Naive thymus-derived CD4-positive, alpha-beta T cell (primary cell): ENCODE measurements at regions of chr2 and their contacts with region 1.

Region 1: GRCh38 chr2:55175254-55176025 is 56.7 kb downstream of the CLHC1 start:
- DNase-seq: peak in 7 of 9 donors; percentile 40 to 69 (median 63)
- ATAC-seq: peak; percentile 96
- H3K4me3 ChIP-seq: no peak overlapping the region
- H3K4me3 Mint-ChIP-seq: peak overlapping the region in 7 of 10 donors; percentile 0 to 49 (median 24)
- H3K27ac ChIP-seq: no peak overlapping the region
- H3K27ac Mint-ChIP-seq: peak overlapping the region in 5 of 9 donors; percentile 2 to 69 (median 46)
- H3K4me1 ChIP-seq: no peaks in the 10 kb centered on the region
- H3K4me1 Mint-ChIP-seq: peaks cover 0 to 10% (median 8%) of the 10 kb centered on the region in 7 donors
- H3K27me3 ChIP-seq: no peaks in the 10 kb centered on the region
- H3K27me3 Mint-ChIP-seq: no peaks in the 10 kb centered on the region

Region 2: DNA sequence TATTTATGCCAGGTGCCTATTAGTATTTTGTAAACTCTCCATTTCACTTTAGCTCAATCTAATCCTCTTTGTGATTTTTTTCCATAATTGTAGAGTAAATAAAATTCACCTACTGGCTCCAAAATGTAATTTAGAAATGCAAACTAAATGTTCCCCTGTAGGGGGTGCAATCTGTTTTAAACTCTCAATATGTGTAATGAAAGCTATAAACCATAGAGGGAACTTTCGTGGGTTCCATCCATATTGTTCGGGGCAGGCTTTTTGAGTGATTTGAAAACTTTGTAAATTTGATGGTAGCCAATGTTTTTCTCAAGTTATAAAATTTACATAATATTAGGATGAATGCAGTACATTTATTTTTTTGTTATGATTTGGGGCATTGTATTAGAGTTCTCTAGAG is 968.8 kb before region 1 on chr2:
- CTCF ChIA-PET with region 1: no interaction called
- POLR2A ChIA-PET with region 1: no interaction called
- intact Hi-C with region 1: loop called in 1 of 2 experiments (anchors 10 kb)
- DNase-seq: peak in 2 of 9 donors; percentile 5 to 11
- ATAC-seq: no peak
- H3K4me3 ChIP-seq: no peak overlapping the region
- H3K4me3 Mint-ChIP-seq: no peak overlapping the region
- H3K27ac ChIP-seq: no peak overlapping the region
- H3K27ac Mint-ChIP-seq: no peak overlapping the region
- H3K4me1 ChIP-seq: no peaks in the 10 kb centered on the region
- H3K4me1 Mint-ChIP-seq: peaks cover 3 to 25% (median 13%) of the 10 kb centered on the region in 7 donors
- H3K27me3 ChIP-seq: no peaks in the 10 kb centered on the region
- H3K27me3 Mint-ChIP-seq: no peaks in the 10 kb centered on the region

Region 3: DNA sequence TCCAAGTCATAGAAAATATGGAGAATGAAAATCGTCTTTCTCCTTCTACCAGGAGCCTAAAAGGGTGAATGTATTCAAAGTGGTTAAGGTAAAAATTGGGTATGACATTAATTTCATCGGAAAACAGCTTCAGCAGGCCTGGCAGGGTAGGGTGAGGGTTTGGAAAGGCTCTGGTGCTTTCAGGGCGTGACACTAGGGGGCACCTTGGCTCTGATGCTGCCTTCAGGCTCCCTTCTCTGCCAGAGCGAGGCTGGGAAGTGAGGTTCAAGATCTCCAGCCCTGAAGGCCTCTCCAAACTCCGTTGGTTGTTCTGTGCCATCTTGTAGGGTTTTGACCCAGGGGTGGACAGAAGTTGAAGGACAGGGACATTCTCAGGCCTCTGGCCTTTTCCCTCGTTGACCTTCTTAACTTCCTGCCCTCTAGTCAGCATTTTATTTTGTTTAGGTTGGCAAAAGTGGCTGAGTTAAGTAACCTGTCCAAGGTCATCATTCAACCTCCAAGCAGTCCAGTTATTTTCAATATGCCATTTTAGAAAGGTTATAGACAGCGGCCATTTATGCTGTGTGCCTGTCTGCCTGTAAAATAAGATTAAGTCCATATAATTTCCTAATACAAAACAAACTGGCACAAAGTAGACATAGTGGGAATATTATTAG is 411.7 kb before region 1 on chr2:
- CTCF ChIA-PET with region 1: no interaction called
- POLR2A ChIA-PET with region 1: no interaction called
- intact Hi-C with region 1: loop called in 1 of 2 experiments (anchors 5 kb)
- DNase-seq: no peak
- ATAC-seq: no peak
- H3K4me3 ChIP-seq: no peak overlapping the region
- H3K4me3 Mint-ChIP-seq: no peak overlapping the region
- H3K27ac ChIP-seq: no peak overlapping the region
- H3K27ac Mint-ChIP-seq: no peak overlapping the region
- H3K4me1 ChIP-seq: no peaks in the 10 kb centered on the region
- H3K4me1 Mint-ChIP-seq: peaks cover 0 to 7% (median 0%) of the 10 kb centered on the region in 7 donors
- H3K27me3 ChIP-seq: no peaks in the 10 kb centered on the region
- H3K27me3 Mint-ChIP-seq: peaks cover 0 to 6% (median 3%) of the 10 kb centered on the region in 5 donors

Region 4: GRCh38 chr2:54899576-54900200 is 275.8 kb before region 1 on chr2:
- CTCF ChIA-PET with region 1: interaction called, 38 read pairs
- POLR2A ChIA-PET with region 1: no interaction called
- intact Hi-C with region 1: loop called in 1 of 2 experiments (anchors 1 kb)
- DNase-seq: peak in 5 of 9 donors; percentile 6 to 40 (median 16)
- ATAC-seq: peak; percentile 31
- H3K4me3 ChIP-seq: no peak overlapping the region
- H3K4me3 Mint-ChIP-seq: no peak overlapping the region
- H3K27ac ChIP-seq: no peak overlapping the region
- H3K27ac Mint-ChIP-seq: peak overlapping the region in 4 of 9 donors; percentile 9 to 89 (median 72)
- H3K4me1 ChIP-seq: peaks cover 10 to 19% of the 10 kb centered on the region in 2 donors
- H3K4me1 Mint-ChIP-seq: peaks cover 13 to 32% (median 29%) of the 10 kb centered on the region in 7 donors
- H3K27me3 ChIP-seq: no peaks in the 10 kb centered on the region
- H3K27me3 Mint-ChIP-seq: no peaks in the 10 kb centered on the region

Region 5: DNA sequence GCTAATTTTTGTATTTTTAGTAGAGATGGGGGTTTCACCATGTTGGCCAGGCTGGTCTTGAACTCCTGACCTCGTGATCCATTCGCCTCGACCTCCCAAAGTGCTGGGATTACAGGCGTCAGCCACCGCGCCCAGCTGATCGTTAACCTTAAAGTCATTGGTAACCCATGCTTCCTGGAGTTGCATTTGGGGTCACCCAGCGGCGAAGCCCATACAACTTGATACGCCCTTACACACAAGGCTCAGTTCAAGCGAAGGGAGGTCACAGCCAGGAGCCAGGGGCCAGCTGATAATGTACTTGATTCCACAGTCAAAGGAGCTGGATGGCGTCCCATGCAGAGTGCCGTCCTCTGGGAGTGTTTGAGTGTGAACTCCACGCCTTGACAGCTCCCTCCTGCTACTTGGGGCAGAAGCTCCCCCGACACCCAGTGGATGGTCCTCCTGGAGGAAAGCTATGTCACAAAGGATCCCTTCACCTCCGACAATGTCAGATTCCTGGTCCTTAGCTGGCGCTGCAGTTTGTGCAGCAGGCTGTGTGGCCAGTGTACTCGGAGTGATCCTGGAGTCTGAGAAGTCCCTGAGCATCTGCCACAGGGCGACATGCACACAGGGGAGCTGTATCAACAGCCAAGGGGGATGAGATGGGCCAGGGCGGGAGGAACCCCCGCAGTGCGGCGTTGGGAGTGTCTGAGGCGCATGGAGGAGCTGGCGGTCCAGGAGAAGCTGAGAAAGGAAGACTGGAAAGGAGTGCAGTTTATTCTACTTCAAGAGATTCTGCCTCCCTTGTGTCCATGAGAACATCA is 48.7 kb after region 1 on chr2:
- CTCF ChIA-PET with region 1: interaction called, 6 read pairs
- POLR2A ChIA-PET with region 1: no interaction called
- intact Hi-C with region 1: loop called in 1 of 2 experiments (anchors 5 kb)
- DNase-seq: peak in 1 of 9 donors; percentile 13
- ATAC-seq: no peak
- H3K4me3 ChIP-seq: no peak overlapping the region
- H3K4me3 Mint-ChIP-seq: peak overlapping the region; percentile 71 to 89 (median 82)
- H3K27ac ChIP-seq: peak overlapping the region; percentile 92
- H3K27ac Mint-ChIP-seq: peak overlapping the region; percentile 72 to 94 (median 89)
- H3K4me1 ChIP-seq: peaks cover 14 to 18% of the 10 kb centered on the region in 2 donors
- H3K4me1 Mint-ChIP-seq: peaks cover 30 to 62% (median 48%) of the 10 kb centered on the region in 7 donors
- H3K27me3 ChIP-seq: no peaks in the 10 kb centered on the region
- H3K27me3 Mint-ChIP-seq: no peaks in the 10 kb centered on the region

Region 6: DNA sequence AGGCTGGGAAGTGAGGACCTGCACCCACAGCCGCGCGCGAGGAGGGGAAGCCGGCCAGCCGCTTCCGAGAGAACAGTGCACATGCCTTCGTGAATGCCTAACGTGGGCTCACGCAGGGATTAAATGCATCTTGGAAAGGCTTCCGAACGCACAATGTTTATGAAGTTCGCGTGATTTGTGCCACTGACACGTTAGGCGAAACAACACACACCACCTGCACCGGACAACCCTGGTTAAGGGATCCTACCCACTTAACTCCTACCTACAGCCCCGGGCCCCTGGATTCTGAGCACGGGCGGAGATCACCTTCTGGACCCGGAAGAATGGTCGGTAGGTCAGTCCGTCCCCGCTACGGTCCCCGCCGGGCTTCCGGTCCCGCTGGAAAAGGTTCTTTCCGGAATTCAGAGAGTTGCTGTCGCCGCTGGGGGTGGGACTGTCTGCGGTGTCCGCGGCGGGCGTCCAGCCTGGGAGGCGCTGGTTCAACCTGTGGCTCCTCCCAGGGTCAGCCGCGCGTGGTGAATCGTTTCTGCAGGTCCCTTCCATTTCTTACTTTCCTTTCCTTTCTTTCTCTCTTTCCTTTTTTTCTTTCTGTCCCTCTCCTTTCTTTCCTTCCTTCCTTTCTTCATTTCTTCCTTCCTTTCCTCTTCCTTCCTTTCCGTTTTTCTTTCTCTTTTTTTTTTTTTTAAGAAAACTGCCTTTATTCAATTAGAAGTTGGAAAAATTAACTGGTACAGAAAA is 93.6 kb after region 1 on chr2 and contains the start of gene MTIF2:
- CTCF ChIA-PET with region 1: no interaction called
- POLR2A ChIA-PET with region 1: no interaction called
- intact Hi-C with region 1: no loop called
- DNase-seq: peak; percentile 64 to 90 (median 75)
- ATAC-seq: peak; percentile 97
- H3K4me3 ChIP-seq: peak within 1 kb of the TSS; percentile 84
- H3K4me3 Mint-ChIP-seq: peak within 1 kb of the TSS; percentile 78 to 97 (median 94)
- H3K27ac ChIP-seq: peak within 1 kb of the TSS; percentile 79
- H3K27ac Mint-ChIP-seq: peak within 1 kb of the TSS; percentile 94 to 97 (median 96)
- H3K4me1 ChIP-seq: peaks cover 13 to 16% of the 10 kb centered on the region in 2 donors
- H3K4me1 Mint-ChIP-seq: peaks cover 15 to 35% (median 27%) of the 10 kb centered on the region in 7 donors
- H3K27me3 ChIP-seq: no peaks in the 10 kb centered on the region
- H3K27me3 Mint-ChIP-seq: peaks cover 0 to 5% (median 0%) of the 10 kb centered on the region in 5 donors
- total RNA-seq, gene MTIF2: 23.0 to 35.5 (median 28.0) TPM

Region 7: DNA sequence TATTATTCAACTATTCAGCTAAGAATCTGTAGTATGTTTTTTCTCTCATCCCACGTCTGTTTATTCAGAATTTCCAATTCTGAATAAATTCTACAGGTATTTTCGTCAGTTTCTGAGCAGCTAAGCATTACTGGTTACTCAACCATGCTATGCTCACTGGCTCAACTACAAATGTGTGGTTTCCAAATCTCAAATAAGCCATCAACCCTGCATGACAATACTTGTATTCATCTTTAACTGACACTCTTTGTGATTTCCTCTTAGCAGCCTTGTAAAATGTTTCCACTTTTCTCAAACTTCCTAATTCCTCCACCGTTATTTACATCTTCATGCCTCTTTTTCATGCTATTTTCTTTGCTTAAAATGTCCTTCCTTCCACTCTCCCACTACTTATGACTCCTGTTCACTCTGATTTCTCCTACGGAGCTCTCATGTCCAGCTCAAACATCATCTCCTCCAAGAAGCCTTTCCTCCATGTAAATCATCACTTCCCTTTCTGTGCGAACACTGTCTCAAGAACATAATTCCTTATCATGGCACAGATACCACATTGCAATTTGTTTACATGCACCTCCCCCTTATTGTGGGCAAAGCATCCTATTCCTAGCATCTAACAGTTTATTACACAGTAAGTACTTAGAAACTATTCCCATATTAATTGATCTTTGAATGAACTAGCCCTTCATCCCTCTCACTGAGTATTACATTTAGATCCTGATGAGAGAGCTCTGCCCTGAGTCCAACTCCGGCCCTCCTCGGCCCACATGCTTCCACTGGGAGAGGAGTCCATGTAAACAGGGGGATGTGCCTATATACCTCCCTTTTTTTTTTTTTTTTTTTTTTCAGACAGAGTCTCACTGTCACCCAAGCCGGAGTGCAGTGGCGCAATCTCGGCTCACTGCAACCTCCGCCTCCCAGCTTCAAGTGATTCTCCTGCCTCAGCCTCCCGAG is 233.8 kb after region 1 on chr2:
- CTCF ChIA-PET with region 1: no interaction called
- POLR2A ChIA-PET with region 1: no interaction called
- intact Hi-C with region 1: no loop called
- DNase-seq: no peak
- ATAC-seq: no peak
- H3K4me3 ChIP-seq: no peak overlapping the region
- H3K4me3 Mint-ChIP-seq: no peak overlapping the region
- H3K27ac ChIP-seq: no peak overlapping the region
- H3K27ac Mint-ChIP-seq: peak overlapping the region in 1 of 9 donors; percentile 33
- H3K4me1 ChIP-seq: no peaks in the 10 kb centered on the region
- H3K4me1 Mint-ChIP-seq: peaks cover 0 to 10% (median 0%) of the 10 kb centered on the region in 7 donors
- H3K27me3 ChIP-seq: no peaks in the 10 kb centered on the region
- H3K27me3 Mint-ChIP-seq: no peaks in the 10 kb centered on the region

Region 8: DNA sequence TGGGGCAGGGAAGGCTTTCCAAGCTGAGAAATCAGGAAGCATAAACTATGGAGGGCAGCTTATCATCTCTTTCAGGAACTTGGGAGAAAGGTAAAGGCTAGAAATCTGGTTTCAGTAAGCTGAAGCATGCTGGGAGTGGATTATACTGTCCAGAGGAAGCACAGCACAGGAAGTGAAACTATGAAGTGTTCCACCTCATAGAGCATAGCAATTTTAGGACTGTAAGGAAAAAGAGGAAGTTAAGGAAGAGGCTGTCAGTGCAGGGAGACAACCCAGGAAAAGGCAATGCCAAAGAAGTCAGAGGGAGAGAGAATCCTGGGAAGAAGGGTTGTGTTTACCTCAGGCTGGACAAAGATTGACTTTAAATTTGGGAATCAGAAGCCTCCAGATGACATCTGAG is 696.2 kb after region 1 on chr2:
- CTCF ChIA-PET with region 1: no interaction called
- POLR2A ChIA-PET with region 1: no interaction called
- intact Hi-C with region 1: no loop called
- DNase-seq: no peak
- ATAC-seq: peak; percentile 67
- H3K4me3 ChIP-seq: no peak overlapping the region
- H3K4me3 Mint-ChIP-seq: no peak overlapping the region
- H3K27ac ChIP-seq: no peak overlapping the region
- H3K27ac Mint-ChIP-seq: no peak overlapping the region
- H3K4me1 ChIP-seq: no peaks in the 10 kb centered on the region
- H3K4me1 Mint-ChIP-seq: peaks cover 0 to 2% (median 0%) of the 10 kb centered on the region in 7 donors
- H3K27me3 ChIP-seq: no peaks in the 10 kb centered on the region
- H3K27me3 Mint-ChIP-seq: peaks cover 0 to 18% (median 9%) of the 10 kb centered on the region in 5 donors